ENCODE measurements at regions of chr7 and their contacts with region 1.

Region 1: DNA sequence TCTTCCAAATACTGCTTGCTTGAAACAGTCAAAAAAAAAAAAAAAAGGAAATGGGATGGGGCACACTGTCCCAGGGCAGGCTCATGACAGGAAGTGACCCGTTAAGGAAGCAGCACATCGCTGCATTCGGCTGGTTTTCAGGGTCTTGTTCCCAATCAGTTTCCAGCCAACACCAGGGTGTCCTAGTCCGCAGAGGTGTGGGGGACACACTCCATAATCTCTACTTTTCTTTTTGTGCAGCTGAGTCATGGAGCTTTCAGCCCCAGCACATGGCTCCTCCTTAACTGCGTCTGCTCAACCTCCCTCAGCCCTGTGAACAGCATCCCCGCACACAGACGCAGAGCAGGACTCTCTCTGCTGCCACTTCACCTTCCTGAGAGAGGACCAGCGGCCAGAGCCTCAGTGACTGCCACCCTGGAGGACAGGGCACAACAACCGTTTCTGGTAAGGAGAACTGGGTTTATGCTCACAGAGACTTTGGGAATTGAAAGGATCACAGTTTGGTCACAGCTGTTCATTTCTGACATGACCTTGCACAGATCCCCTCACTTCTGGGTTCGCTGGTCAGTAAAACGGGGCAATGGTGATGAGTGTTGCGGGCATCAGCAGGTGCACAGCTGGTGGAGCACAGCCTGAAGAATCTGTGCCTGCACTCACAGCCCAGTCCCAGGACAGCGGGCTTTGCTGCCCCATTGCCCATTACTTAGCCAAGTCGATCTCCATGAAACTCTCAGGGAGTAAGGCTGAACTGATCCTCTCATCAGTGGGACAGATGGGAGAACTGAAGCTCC is at the start of gene GIMAP5:
- DNase-seq: peak in 7 of 9 experiments; percentile 57 to 82 (median 61)
- ATAC-seq: peak; percentile 71
- H3K4me3 ChIP-seq: peak within 1 kb of the TSS; percentile 76 to 83
- H3K4me3 Mint-ChIP-seq: peak within 1 kb of the TSS; percentile 95
- H3K27ac ChIP-seq: peak within 1 kb of the TSS; percentile 66 to 81
- H3K27ac Mint-ChIP-seq: peak within 1 kb of the TSS; percentile 97
- H3K4me1 ChIP-seq: peaks cover 66% of the 10 kb centered on the region
- H3K4me1 Mint-ChIP-seq: peaks cover 74% of the 10 kb centered on the region
- H3K27me3 ChIP-seq: no peaks in the 10 kb centered on the region
- H3K27me3 Mint-ChIP-seq: no peaks in the 10 kb centered on the region
- CTCF ChIP-seq: no peak
- total RNA-seq, gene GIMAP5: 23.5 to 24.1 TPM

Region 2: GRCh38 chr7:150368096-150368883 is 369.2 kb before region 1 on chr7 and contains the start of gene REPIN1:
- CTCF ChIA-PET with region 1: no interaction called
- POLR2A ChIA-PET with region 1: no interaction called
- intact Hi-C with region 1: loop called in 1 of 2 experiments (anchors 5 kb)
- DNase-seq: peak; percentile 52 to 90 (median 85)
- ATAC-seq: no peak
- H3K4me3 ChIP-seq: peak within 1 kb of the TSS; percentile 78 to 95
- H3K4me3 Mint-ChIP-seq: peak within 1 kb of the TSS; percentile 95
- H3K27ac ChIP-seq: peak within 1 kb of the TSS; percentile 53 to 73
- H3K27ac Mint-ChIP-seq: peak within 1 kb of the TSS; percentile 95
- H3K4me1 ChIP-seq: peaks cover 47% of the 10 kb centered on the region
- H3K4me1 Mint-ChIP-seq: peaks cover 58% of the 10 kb centered on the region
- H3K27me3 ChIP-seq: no peaks in the 10 kb centered on the region
- H3K27me3 Mint-ChIP-seq: no peaks in the 10 kb centered on the region
- CTCF ChIP-seq: no peak
- total RNA-seq, gene REPIN1: 54.0 to 54.1 TPM

Region 3: DNA sequence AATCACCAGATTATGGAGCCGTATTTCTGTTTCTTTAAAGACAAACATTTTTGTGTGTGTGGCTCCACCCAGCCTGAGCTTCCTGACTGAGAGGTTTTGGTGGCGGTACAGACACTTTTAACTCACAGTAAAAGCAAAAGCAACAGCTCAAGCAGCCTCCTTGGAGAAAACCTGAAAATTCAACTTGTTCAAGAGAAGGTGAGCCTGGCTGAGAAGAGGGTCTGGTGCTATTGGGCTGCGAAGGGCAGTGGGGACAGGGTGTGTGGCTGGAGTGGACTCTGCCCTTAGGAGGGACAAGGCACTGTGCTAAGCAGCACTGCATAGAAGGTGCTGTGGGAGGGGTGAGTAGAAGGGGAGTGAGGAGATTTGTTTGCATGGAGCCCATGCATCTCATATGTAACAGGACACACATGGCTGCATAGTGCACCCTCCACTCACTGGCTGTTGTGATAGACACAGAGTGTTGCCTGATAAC is 222.7 kb before region 1 on chr7 and contains the start of gene GIMAP7:
- CTCF ChIA-PET with region 1: interaction called, 7 read pairs
- POLR2A ChIA-PET with region 1: interaction called, 30 read pairs
- intact Hi-C with region 1: loop called in 1 of 2 experiments (anchors 5 kb)
- DNase-seq: peak; percentile 36 to 87 (median 73)
- ATAC-seq: peak; percentile 82
- H3K4me3 ChIP-seq: peak within 1 kb of the TSS; percentile 63 to 76
- H3K4me3 Mint-ChIP-seq: peak within 1 kb of the TSS; percentile 100
- H3K27ac ChIP-seq: peak within 1 kb of the TSS; percentile 69 to 75
- H3K27ac Mint-ChIP-seq: peak within 1 kb of the TSS; percentile 99
- H3K4me1 ChIP-seq: peaks cover 45% of the 10 kb centered on the region
- H3K4me1 Mint-ChIP-seq: peaks cover 48% of the 10 kb centered on the region
- H3K27me3 ChIP-seq: no peaks in the 10 kb centered on the region
- H3K27me3 Mint-ChIP-seq: no peaks in the 10 kb centered on the region
- CTCF ChIP-seq: no peak
- total RNA-seq, gene GIMAP7: 21.2 to 29.7 TPM

Region 4: DNA sequence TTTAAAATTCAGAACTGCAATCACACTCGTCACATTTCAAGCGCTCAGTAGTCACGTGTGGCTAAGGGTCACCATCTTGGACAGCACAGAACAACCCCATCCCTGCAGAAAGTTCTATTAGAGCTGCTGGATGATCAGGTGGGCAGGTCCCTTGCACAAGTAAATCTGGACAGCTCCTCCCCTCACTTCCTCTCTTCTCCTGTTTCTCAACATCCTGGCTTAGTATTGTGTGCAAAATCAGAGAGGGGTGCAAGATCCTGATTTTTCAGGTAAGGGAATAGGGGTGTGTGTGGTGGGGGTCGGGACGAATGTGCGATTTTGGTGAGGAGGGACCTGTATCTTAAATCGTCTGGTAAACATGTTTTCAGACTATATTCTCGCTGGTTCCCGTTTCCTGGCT is 170.3 kb before region 1 on chr7 and contains the start of gene GIMAP4:
- CTCF ChIA-PET with region 1: interaction called, 11 read pairs
- POLR2A ChIA-PET with region 1: interaction called, 64 read pairs
- intact Hi-C with region 1: loop called in 1 of 2 experiments (anchors 5 kb)
- DNase-seq: peak in 5 of 9 experiments; percentile 33 to 71 (median 50)
- ATAC-seq: peak; percentile 28
- H3K4me3 ChIP-seq: peak within 1 kb of the TSS; percentile 83 to 88
- H3K4me3 Mint-ChIP-seq: peak within 1 kb of the TSS; percentile 97
- H3K27ac ChIP-seq: peak within 1 kb of the TSS; percentile 73 to 74
- H3K27ac Mint-ChIP-seq: peak within 1 kb of the TSS; percentile 98
- H3K4me1 ChIP-seq: peaks cover 73% of the 10 kb centered on the region
- H3K4me1 Mint-ChIP-seq: peaks cover 78% of the 10 kb centered on the region
- H3K27me3 ChIP-seq: no peaks in the 10 kb centered on the region
- H3K27me3 Mint-ChIP-seq: no peaks in the 10 kb centered on the region
- CTCF ChIP-seq: no peak
- total RNA-seq, gene GIMAP4: 11.8 to 13.8 TPM

Region 5: DNA sequence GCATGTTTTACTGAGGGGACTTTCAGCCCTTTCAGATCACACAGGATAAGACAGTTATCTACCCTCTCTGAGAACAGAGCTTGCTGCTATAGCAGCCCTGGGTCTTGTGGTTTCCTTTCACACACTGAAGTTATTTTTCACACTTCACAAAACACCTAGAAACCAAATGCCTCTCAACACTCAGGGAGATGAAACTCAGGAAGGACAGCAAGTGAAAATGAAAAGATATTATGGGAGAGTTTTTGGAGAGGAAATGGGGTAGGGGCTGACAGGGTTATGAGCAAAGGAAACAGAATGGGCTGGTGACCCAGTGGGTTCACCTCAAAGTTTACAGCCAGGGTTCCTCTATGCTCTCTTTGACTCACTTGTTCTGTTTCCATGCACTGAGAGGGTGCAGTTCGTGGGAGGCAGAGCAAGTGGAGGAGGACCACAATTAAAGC is 69.0 kb before region 1 on chr7:
- CTCF ChIA-PET with region 1: interaction called, 7 read pairs
- POLR2A ChIA-PET with region 1: interaction called, 11 read pairs
- intact Hi-C with region 1: no loop called
- DNase-seq: peak in 6 of 9 experiments; percentile 60 to 94 (median 72)
- ATAC-seq: peak; percentile 76
- H3K4me3 ChIP-seq: peak overlapping the region in 1 of 2 experiments; percentile 17
- H3K4me3 Mint-ChIP-seq: peak overlapping the region; percentile 36
- H3K27ac ChIP-seq: peak overlapping the region; percentile 63 to 95
- H3K27ac Mint-ChIP-seq: peak overlapping the region; percentile 97
- H3K4me1 ChIP-seq: peaks cover 88% of the 10 kb centered on the region
- H3K4me1 Mint-ChIP-seq: peaks cover 90% of the 10 kb centered on the region
- H3K27me3 ChIP-seq: no peaks in the 10 kb centered on the region
- H3K27me3 Mint-ChIP-seq: no peaks in the 10 kb centered on the region
- CTCF ChIP-seq: no peak

Region 6: GRCh38 chr7:150716368-150716767 is 21.1 kb before region 1 on chr7 and contains the start of gene GIMAP1:
- CTCF ChIA-PET with region 1: interaction called, 9 read pairs
- POLR2A ChIA-PET with region 1: interaction called, 169 read pairs
- intact Hi-C with region 1: loop called in 1 of 2 experiments (anchors 1 kb)
- DNase-seq: peak in 8 of 9 experiments; percentile 59 to 85 (median 73)
- ATAC-seq: peak; percentile 84
- H3K4me3 ChIP-seq: peak within 1 kb of the TSS; percentile 90 to 91
- H3K4me3 Mint-ChIP-seq: peak within 1 kb of the TSS; percentile 95
- H3K27ac ChIP-seq: peak within 1 kb of the TSS; percentile 73 to 87
- H3K27ac Mint-ChIP-seq: peak within 1 kb of the TSS; percentile 96
- H3K4me1 ChIP-seq: peaks cover 50% of the 10 kb centered on the region
- H3K4me1 Mint-ChIP-seq: peaks cover 67% of the 10 kb centered on the region
- H3K27me3 ChIP-seq: no peaks in the 10 kb centered on the region
- H3K27me3 Mint-ChIP-seq: no peaks in the 10 kb centered on the region
- CTCF ChIP-seq: no peak
- total RNA-seq, gene GIMAP1: 6.1 to 6.2 TPM

Region 7: DNA sequence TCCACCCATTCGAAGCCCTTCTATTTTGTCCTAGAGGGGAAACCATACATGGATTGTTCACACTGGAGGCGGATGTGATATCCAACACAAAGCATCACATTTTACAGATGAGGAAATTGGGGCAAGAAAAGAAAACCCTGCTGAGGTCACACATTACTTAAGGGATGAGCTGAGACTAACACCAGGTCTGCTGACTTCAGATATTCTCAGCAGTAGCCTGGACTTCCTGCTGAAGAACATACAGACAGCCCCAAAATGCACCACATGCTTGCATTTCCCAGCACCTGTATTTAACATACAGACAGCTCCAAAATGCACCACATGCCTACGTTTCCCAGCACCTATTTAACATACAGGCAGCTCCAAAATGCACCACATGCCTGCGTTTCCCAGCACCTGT is 10.9 kb after region 1 on chr7:
- CTCF ChIA-PET with region 1: interaction called, 3 read pairs
- POLR2A ChIA-PET with region 1: interaction called, 30 read pairs
- intact Hi-C with region 1: loop called in 1 of 2 experiments (anchors 1 kb)
- DNase-seq: peak in 2 of 9 experiments; percentile 44 to 68
- ATAC-seq: peak; percentile 52
- H3K4me3 ChIP-seq: no peak overlapping the region
- H3K4me3 Mint-ChIP-seq: peak overlapping the region; percentile 20
- H3K27ac ChIP-seq: peak overlapping the region; percentile 11 to 65
- H3K27ac Mint-ChIP-seq: peak overlapping the region; percentile 97
- H3K4me1 ChIP-seq: peaks cover 94% of the 10 kb centered on the region
- H3K4me1 Mint-ChIP-seq: peaks cover 91% of the 10 kb centered on the region
- H3K27me3 ChIP-seq: no peaks in the 10 kb centered on the region
- H3K27me3 Mint-ChIP-seq: no peaks in the 10 kb centered on the region
- CTCF ChIP-seq: no peak

Region 8: DNA sequence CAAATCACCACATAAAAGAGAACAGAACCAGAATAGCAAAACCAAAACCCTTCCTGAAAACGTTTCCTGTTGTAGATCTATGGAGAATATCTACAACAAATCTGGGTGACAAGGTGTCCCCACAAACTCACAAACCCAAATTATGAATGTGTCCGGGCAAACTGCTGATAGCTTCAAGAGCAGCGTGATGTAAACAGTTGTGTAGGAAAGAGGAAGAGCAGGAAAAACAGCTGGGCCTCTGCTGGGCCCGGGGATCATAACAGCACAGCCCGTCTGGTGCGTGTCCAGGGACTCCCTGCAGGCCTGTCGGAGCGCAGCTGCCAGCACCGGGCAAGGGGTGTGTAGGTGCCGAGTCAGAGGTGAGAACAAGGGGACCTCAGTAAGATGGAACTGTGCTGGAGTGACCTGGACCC is 186.9 kb after region 1 on chr7:
- CTCF ChIA-PET with region 1: no interaction called
- POLR2A ChIA-PET with region 1: no interaction called
- intact Hi-C with region 1: no loop called
- DNase-seq: no peak
- ATAC-seq: no peak
- H3K4me3 ChIP-seq: no peak overlapping the region
- H3K4me3 Mint-ChIP-seq: no peak overlapping the region
- H3K27ac ChIP-seq: no peak overlapping the region
- H3K27ac Mint-ChIP-seq: no peak overlapping the region
- H3K4me1 ChIP-seq: peaks cover 15% of the 10 kb centered on the region
- H3K4me1 Mint-ChIP-seq: peaks cover 15% of the 10 kb centered on the region
- H3K27me3 ChIP-seq: no peaks in the 10 kb centered on the region
- H3K27me3 Mint-ChIP-seq: peaks cover 9% of the 10 kb centered on the region
- CTCF ChIP-seq: no peak

Measured in CD8-positive, alpha-beta T cell (primary cell).